Activated naive CD4-positive, alpha-beta T cell treated with anti-CD3 and anti-CD28 coated beads, Interleukin-2, amount 10 ng/mL, durations not matched to agents 7 days and 5 days (primary cell): ENCODE measurements at regions of chr13 and their contacts with region 1.

Region 1: GRCh38 chr13:20828539-20829364 is 55.0 kb upstream of the EEF1AKMT1 start:
- DNase-seq: peak; percentile 46
- H3K4me3 Mint-ChIP-seq: peak overlapping the region; percentile 12
- H3K27ac Mint-ChIP-seq: no peak overlapping the region
- H3K4me1 Mint-ChIP-seq: peaks cover 7% of the 10 kb centered on the region
- H3K27me3 Mint-ChIP-seq: no peaks in the 10 kb centered on the region

Region 2: DNA sequence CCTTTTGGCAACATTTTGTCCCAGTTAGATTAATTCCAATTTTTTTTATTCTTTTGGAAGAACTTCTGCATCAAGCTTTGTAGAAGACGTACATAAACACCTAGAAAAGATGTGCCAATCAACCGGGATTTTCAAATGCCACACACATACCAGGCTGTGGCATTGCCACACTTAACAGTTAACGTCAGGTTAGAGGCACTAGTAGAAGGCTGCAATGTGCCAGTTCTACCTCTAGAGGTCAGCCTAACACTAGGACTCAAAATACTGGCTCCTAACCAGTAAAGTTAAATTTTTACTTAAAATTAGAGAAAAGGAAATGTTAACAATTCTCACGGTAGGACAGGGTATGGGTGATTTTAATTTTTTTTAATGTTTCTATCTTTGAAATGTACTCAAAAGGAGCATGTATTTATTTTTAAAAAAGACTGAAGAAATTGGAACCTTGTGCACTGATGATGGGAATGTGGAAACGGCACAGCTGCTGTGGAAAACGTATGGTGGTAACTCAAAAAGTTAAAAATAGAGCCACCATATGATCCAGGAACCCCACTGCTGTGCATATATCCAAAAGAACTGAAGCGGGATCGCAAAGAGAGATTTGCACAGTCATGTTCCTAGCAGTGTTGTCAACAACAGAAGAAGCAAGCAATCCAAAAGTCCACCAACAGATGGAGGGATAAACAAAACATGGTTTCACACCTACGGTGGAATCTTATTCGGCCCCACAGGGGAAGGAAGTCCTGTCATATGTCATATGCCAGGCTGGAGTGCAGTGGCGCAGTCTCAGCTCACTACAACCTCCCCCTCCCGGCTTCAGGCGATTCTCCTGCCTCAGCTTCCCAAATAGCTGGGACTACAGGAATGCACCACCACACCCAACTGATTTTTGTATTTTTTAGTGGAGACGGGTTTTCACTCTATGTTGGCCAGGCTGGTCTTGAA is 333.4 kb before region 1 on chr13:
- CTCF ChIA-PET with region 1: interaction called, 38 read pairs
- DNase-seq: peak; percentile 76
- H3K4me3 Mint-ChIP-seq: no peak overlapping the region
- H3K27ac Mint-ChIP-seq: no peak overlapping the region
- H3K4me1 Mint-ChIP-seq: peaks cover 17% of the 10 kb centered on the region
- H3K27me3 Mint-ChIP-seq: no peaks in the 10 kb centered on the region

Region 3: DNA sequence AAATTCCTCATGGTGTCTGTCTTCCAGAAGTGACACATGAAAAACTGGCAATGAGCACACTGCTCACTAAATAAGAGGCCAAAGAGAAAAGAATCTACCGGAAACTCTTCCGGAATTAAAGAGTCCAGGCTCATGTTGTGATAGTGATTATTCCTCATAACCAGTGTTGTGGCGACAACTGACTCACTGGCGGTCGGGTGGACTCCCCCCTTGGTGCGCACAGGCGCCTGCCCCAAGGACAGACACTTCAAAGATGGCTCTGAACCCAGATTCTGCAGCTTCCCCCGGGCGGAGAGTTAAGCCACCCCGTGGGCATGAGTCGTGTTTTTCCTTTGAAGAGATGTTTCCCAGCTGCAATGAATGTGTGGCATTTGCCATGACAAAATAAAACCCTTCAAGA is 115.0 kb before region 1 on chr13:
- CTCF ChIA-PET with region 1: interaction called, 17 read pairs
- DNase-seq: no peak
- H3K4me3 Mint-ChIP-seq: no peak overlapping the region
- H3K27ac Mint-ChIP-seq: no peak overlapping the region
- H3K4me1 Mint-ChIP-seq: peaks cover 8% of the 10 kb centered on the region
- H3K27me3 Mint-ChIP-seq: peaks cover 33% of the 10 kb centered on the region

Region 4: DNA sequence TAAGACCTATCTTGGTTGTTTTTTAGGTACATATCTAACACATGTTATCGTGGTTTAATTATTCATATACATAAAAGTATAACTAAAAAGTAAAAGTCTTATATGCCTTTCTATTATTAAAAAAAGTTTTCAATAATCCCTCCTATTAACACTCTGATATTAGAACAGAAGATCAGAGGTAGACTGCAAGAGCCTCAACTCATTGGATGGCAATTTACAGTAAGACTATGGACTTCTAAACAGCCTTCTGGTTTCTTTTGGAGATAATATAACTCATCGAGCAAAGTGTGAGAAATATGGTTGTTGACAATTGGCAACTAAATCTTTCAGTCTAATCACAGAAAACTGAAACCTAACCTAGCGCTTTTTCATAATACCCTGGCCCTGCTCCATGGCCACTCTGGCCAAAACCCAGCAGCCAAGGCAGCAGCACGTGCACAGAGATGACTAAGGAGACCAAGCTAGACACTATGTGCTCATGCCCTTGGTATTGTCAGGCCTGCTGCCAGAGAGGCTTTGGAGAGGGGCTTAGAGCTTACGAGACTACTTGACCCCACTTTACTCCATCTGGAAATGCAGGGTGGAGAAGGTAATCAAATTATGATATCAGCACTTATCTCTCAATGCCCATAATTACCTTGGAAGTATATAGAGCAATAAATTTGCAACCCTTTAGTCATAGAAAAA is 14.4 kb before region 1 on chr13:
- CTCF ChIA-PET with region 1: interaction called, 12 read pairs
- DNase-seq: no peak
- H3K4me3 Mint-ChIP-seq: no peak overlapping the region
- H3K27ac Mint-ChIP-seq: no peak overlapping the region
- H3K4me1 Mint-ChIP-seq: no peaks in the 10 kb centered on the region
- H3K27me3 Mint-ChIP-seq: no peaks in the 10 kb centered on the region

Region 5: DNA sequence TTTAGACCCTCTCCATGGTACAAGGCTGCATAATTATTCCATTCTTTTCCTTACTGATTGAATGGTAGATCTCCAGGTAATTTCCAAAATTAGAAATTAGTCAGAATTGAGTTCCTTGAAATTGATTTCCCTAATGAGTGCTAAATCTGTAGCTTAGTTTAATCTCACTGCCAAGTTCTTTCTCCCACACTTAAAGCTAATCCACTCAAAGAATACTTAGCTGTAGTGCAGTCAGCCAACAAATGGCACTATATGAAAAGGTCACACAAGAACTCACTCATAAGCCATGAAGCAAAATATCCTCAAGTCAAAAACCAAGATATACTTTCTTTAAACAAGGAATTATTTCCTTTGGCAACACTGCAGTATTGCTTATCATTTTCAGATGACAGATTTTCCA is 11.8 kb after region 1 on chr13:
- CTCF ChIA-PET with region 1: interaction called, 11 read pairs
- DNase-seq: no peak
- H3K4me3 Mint-ChIP-seq: no peak overlapping the region
- H3K27ac Mint-ChIP-seq: no peak overlapping the region
- H3K4me1 Mint-ChIP-seq: peaks cover 1% of the 10 kb centered on the region
- H3K27me3 Mint-ChIP-seq: no peaks in the 10 kb centered on the region

Region 6: GRCh38 chr13:20891768-20892167 is 63.0 kb after region 1 on chr13:
- CTCF ChIA-PET with region 1: no interaction called
- DNase-seq: peak; percentile 27
- H3K4me3 Mint-ChIP-seq: no peak overlapping the region
- H3K27ac Mint-ChIP-seq: peak overlapping the region; percentile 24
- H3K4me1 Mint-ChIP-seq: peaks cover 15% of the 10 kb centered on the region
- H3K27me3 Mint-ChIP-seq: no peaks in the 10 kb centered on the region